GM23248 (cell line): ENCODE measurements at regions of chr5 and their contacts with region 1.

Region 1: GRCh38 chr5:149114403-149115312 is 26.6 kb upstream of the ABLIM3 start:
- DNase-seq: peak; percentile 89
- H3K4me3 ChIP-seq: 0 out of 2 replicates have a peak overlapping the region, but pooled peaks have one; percentile 3
- H3K27ac ChIP-seq: peak overlapping the region; percentile 19; the same call in 1 of the 2 replicates
- H3K4me1 ChIP-seq: peaks cover 14% of the 10 kb centered on the region
- H3K27me3 ChIP-seq: no peaks in the 10 kb centered on the region

Region 2: GRCh38 chr5:148179234-148179824 is 935.3 kb before region 1 on chr5:
- in situ Hi-C with region 1: loop called (anchors 25 kb)
- DNase-seq: peak; percentile 70
- H3K4me3 ChIP-seq: no peak overlapping the region
- H3K27ac ChIP-seq: no peak overlapping the region
- H3K4me1 ChIP-seq: no peaks in the 10 kb centered on the region
- H3K27me3 ChIP-seq: peaks cover 4% of the 10 kb centered on the region; the same call in 1 of the 2 replicates

Region 3: GRCh38 chr5:148443998-148444397 is 670.7 kb before region 1 on chr5:
- in situ Hi-C with region 1: loop called (anchors 25 kb)
- DNase-seq: peak; percentile 76
- H3K4me3 ChIP-seq: no peak overlapping the region
- H3K27ac ChIP-seq: no peak overlapping the region
- H3K4me1 ChIP-seq: no peaks in the 10 kb centered on the region
- H3K27me3 ChIP-seq: no peaks in the 10 kb centered on the region

Region 4: DNA sequence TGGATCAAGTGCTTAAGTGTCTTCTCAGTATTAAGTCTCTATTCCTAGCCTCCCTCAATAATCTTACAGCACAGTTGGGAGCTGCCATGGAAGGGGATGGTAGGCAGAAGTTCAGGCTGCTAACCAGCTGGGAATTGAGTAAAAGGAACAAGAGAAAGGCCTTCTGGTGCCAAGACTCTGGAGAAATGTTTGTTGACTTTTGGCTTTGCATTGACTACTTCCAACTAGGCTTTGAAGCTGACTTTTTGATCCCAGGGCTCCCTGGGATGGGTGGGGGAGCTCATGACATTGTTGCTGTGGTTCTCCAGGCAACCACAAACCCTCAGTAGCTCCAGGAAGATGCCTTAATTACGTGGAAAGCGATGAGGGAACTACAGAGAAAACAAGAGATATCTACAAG is 375.1 kb before region 1 on chr5:
- in situ Hi-C with region 1: loop called (anchors 5 kb)
- DNase-seq: no peak
- H3K4me3 ChIP-seq: no peak overlapping the region
- H3K27ac ChIP-seq: no peak overlapping the region
- H3K4me1 ChIP-seq: no peaks in the 10 kb centered on the region; the same call in 1 of the 2 replicates
- H3K27me3 ChIP-seq: 0 out of 2 replicates have a peak, but pooled peaks cover 24% of the 10 kb centered on the region